Sigmoid colon (tissue), 7 donors: ENCODE measurements at regions of chr7 and their contacts with region 1.

Region 1: DNA sequence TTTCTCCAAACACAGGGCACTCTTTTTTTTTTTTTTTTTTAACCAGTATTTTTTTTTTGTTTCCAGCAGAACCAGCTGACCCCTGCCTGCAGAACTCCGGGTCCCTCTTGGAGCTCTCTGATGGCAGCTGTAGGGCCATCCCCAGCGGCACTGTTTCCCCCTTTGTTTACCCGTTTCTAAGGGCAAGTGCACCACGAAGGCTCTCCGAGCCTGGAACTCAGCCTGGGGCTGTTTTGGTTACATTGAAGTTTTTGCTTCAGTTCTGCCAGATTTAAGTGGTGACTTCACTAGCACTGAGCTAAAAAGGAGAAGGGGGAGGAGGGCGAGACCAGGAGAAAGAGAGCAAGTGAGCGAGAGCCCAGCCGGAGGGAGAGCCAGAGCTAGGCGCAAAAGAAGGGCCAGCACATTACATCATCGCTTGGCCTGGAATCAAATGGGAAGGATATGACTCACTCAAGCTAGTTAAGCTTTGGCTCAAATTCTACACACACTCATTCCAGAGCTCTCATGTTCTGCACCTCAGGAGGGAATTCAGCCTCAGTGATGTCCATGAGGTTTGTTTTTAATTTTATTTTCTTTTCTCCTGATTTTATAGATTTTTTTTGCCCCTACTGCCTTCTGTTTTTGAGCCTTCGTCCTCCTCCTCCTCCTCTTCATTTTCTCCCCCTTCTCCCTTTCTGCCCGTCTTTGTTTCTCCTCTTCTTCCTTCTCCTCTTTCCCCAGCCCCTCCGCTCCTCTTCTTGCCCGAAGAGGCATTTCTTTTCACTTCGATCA is 272.3 kb downstream of the TRIL start:
- DNase-seq: peak; percentile 98
- H3K4me3 ChIP-seq: peak overlapping the region; percentile 11 to 50 (median 44)
- H3K27ac ChIP-seq: peak overlapping the region; percentile 81 to 92 (median 87)
- H3K4me1 ChIP-seq: peaks cover 0 to 47% (median 29%) of the 10 kb centered on the region in 4 donors
- H3K27me3 ChIP-seq: no peaks in the 10 kb centered on the region
- CTCF ChIP-seq: no peak
- EP300 ChIP-seq: peak in 2 of 4 donors; percentile 12 to 24
- POLR2A ChIP-seq: peak; percentile 41 to 81

Region 2: DNA sequence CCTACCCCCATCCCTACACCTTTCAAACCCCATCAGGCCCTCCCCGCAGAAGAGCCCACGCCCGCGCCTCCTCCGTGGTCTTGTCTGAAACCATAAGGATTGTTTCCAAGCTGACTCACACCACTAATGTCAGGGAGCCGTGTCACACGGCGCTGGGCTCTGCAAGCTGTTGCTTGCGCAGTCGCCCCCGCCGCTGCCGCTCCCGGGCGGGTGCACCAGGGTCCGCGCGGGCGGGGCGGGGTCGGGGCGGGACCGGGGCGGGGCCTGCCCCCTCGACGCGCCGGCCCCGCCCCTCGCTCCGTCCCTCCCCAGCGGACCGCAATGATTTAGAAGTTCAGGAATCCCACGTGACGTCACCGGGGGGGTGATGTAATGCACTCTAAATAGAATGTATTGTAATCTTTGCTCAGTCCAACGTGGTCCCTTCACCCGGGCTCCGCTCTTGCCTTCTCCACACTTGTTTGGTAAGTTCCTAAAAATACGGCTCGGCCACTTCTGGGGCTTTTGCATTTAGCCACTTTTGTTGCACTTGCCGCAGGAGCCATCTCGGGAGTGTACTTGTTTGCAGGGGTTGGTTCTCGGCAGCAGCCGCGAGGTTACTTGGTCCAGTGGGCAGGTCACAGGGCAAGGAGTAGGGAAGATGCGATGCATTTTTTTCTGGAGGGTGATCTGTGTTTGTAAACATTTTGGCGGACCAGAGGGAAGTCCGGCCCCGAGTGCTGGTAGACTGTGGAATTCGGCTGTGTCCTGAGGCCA is 276.7 kb before region 1 on chr7:
- intact Hi-C with region 1: loop called (anchors 2 kb)
- DNase-seq: peak; percentile 99
- H3K4me3 ChIP-seq: peak overlapping the region; percentile 45 to 77 (median 64)
- H3K27ac ChIP-seq: peak overlapping the region; percentile 86 to 93 (median 92)
- H3K4me1 ChIP-seq: peaks cover 0 to 43% (median 23%) of the 10 kb centered on the region in 4 donors
- H3K27me3 ChIP-seq: no peaks in the 10 kb centered on the region
- CTCF ChIP-seq: no peak
- EP300 ChIP-seq: peak in 1 of 4 donors; percentile 6
- POLR2A ChIP-seq: peak; percentile 50 to 67

Region 3: DNA sequence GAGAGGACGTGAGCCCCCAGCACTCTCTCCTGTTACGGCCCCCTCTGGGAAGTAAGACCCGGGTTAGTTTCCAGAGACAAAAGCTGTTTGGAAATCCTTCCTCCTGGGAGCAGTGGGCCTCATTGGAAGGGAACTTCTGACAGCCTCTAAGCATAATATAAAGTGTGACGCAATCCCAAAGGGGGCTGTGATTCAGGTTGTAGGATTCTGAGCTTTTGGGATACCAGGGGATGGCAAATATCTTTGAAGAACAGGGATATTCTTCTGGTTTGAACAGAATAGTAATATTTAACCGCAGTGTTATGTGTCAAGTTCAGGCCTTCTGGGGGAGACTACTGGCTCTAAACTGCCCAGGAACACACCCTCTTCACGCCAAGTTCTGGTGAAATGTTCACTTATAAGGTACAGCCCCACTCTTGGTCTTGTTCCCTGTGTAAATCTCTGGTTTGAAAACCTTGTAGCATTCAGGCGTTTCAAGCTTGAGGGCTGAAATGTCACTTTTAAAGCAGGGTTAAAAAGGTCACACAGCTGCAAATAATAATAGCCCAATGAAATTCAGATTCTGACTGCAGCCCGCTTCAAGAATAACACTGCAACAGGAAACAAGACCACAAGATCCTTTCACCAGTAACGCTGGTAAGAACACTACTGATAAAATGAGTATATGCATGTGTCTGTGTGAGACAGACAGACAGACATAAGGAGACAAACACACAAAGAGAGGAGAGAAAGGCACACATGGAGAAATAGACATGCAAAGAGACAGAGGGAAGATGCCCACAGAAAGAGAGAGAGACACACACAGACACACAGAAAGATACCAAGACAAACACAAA is 204.5 kb before region 1 on chr7:
- intact Hi-C with region 1: no loop called
- DNase-seq: no peak
- H3K4me3 ChIP-seq: no peak overlapping the region
- H3K27ac ChIP-seq: no peak overlapping the region
- H3K4me1 ChIP-seq: no peaks in the 10 kb centered on the region
- H3K27me3 ChIP-seq: no peaks in the 10 kb centered on the region
- CTCF ChIP-seq: no peak
- EP300 ChIP-seq: no peak
- POLR2A ChIP-seq: no peak

Region 4: GRCh38 chr7:28626624-28627262 is 59.1 kb before region 1 on chr7:
- intact Hi-C with region 1: loop called (anchors 5 kb)
- DNase-seq: no peak
- H3K4me3 ChIP-seq: no peak overlapping the region
- H3K27ac ChIP-seq: peak overlapping the region in 1 of 4 donors; percentile 48
- H3K4me1 ChIP-seq: peaks cover 0 to 53% (median 35%) of the 10 kb centered on the region in 4 donors
- H3K27me3 ChIP-seq: no peaks in the 10 kb centered on the region
- CTCF ChIP-seq: peak in 3 of 4 experiments; percentile 28 to 55 (median 29)
- EP300 ChIP-seq: no peak
- POLR2A ChIP-seq: no peak

Region 5: DNA sequence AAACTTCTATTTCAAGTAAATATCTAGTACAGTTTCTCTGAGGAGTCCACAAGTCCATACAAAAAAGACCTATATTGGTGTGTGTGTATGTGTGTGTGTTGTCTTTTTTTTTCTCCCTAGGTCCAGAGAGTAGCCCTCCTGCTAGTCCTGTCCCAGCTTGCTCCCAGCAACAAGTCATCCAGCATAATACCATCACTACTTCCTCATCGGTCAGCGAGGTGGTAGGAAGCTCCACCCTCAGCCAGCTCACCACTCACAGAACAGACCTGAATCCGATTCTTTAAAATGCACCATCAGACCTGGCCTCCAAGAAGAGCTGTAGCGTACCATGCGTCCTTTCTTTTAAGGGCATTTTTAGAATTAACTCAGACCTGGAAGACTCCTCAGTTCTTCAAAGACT is 133.2 kb after region 1 on chr7:
- intact Hi-C with region 1: no loop called
- DNase-seq: no peak
- H3K4me3 ChIP-seq: no peak overlapping the region
- H3K27ac ChIP-seq: no peak overlapping the region
- H3K4me1 ChIP-seq: no peaks in the 10 kb centered on the region
- H3K27me3 ChIP-seq: no peaks in the 10 kb centered on the region
- CTCF ChIP-seq: no peak
- EP300 ChIP-seq: no peak
- POLR2A ChIP-seq: no peak